A549 (cell line): ENCODE measurements at regions of chr17 and their contacts with region 1.

Region 1: GRCh38 chr17:17641621-17642409 is 39.4 kb upstream of the RAI1 start:
- DNase-seq: peak; percentile 70 to 85
- ATAC-seq: peak; percentile 85 to 96
- H3K4me3 ChIP-seq: no peak overlapping the region
- H3K27ac ChIP-seq: no peak overlapping the region
- H3K4me1 ChIP-seq: no peaks in the 10 kb centered on the region
- CTCF ChIP-seq: peak; percentile 97
- EP300 ChIP-seq: no peak
- POLR2A ChIP-seq: no peak
- RAD21 ChIP-seq: peak; percentile 97 to 99

Region 2: DNA sequence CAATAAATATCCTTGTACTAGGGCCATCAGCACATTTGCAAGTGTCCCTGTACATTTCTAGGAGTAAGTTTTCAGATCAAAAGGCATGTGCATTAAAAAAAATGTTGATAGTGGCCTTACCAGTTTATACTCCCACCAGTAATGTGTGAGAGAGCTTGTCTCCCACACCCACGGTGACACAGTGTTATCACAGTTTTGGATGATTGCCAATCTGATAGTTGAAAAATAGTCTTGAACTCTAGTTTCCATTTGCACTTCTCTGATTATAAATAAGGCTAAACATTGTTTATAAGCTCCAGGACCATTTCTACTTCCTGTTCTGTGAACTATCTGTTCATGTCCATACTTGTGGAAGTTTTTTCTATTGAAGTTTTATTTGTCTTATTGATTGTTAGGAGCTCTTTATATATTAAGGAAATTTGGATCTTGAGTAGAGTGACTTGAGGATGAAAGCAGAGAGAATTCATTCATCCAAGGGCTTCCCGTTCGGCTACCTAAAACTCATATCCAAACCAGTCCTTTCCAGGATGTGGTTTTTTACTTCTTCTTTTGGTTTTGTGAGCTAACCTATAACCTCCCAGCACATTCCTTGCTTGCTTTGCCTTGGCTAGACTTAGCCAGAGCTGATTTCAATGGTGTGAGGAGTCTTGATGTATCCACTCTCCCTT is 625.5 kb before region 1 on chr17:
- CTCF ChIA-PET with region 1: no interaction called
- POLR2A ChIA-PET with region 1: no interaction called
- DNase-seq: no peak
- ATAC-seq: no peak
- H3K4me3 ChIP-seq: no peak overlapping the region
- H3K27ac ChIP-seq: peak overlapping the region; percentile 94 to 98
- H3K4me1 ChIP-seq: peaks cover 67% of the 10 kb centered on the region
- CTCF ChIP-seq: no peak
- EP300 ChIP-seq: no peak
- POLR2A ChIP-seq: no peak
- RAD21 ChIP-seq: no peak

Region 3: DNA sequence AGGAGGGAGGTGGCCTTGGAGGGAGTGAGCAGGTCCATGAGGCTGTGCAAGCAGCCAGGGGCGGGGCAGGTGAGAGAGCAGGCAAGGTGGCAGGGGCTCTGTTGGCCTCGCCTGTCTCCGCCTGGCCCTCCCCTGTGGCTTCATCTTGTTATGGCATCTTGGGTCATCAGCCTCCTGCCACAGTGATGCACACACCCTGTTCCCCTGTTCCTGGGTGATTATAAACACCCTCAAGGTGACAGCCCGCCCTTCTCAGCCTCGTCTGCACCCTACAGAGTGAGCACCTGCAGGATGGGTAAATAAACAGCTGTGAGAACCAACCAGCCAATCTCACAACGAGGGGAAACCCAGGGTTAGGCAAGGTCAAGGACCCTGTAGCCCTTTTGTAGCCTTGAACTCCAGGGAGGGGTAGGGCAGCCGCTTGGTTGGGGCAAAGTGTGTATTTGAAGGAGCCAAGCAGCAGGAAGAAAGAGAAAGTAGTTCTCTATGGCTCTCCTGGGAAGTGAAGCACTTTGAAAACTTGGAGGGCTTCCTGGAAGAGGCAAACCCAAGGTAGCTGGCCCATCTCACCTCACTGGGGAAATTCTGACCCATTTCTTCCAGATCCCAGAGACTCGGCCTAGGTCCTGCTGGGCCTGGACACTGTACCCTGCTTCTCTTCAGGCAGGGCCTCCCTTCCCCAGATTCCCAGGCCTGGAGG is 278.0 kb before region 1 on chr17:
- CTCF ChIA-PET with region 1: interaction called, 365 read pairs
- POLR2A ChIA-PET with region 1: no interaction called
- DNase-seq: no peak
- ATAC-seq: peak; percentile 12 to 27; a peak in 2 of 6 replicates
- H3K4me3 ChIP-seq: no peak overlapping the region
- H3K27ac ChIP-seq: no peak overlapping the region
- H3K4me1 ChIP-seq: no peaks in the 10 kb centered on the region
- CTCF ChIP-seq: no peak
- EP300 ChIP-seq: no peak
- POLR2A ChIP-seq: no peak
- RAD21 ChIP-seq: no peak

Region 4: GRCh38 chr17:17394494-17394893 is 247.3 kb before region 1 on chr17:
- CTCF ChIA-PET with region 1: interaction called, 11 read pairs
- POLR2A ChIA-PET with region 1: no interaction called
- DNase-seq: no peak
- ATAC-seq: no peak
- H3K4me3 ChIP-seq: no peak overlapping the region
- H3K27ac ChIP-seq: no peak overlapping the region
- H3K4me1 ChIP-seq: no peaks in the 10 kb centered on the region
- CTCF ChIP-seq: no peak
- EP300 ChIP-seq: no peak
- POLR2A ChIP-seq: no peak
- RAD21 ChIP-seq: no peak

Region 5: GRCh38 chr17:17511881-17512858 is 129.6 kb before region 1 on chr17:
- CTCF ChIA-PET with region 1: interaction called, 12 read pairs
- POLR2A ChIA-PET with region 1: no interaction called
- DNase-seq: peak; percentile 39 to 54
- ATAC-seq: peak; percentile 31 to 62; a peak in 3 of 6 replicates
- H3K4me3 ChIP-seq: no peak overlapping the region
- H3K27ac ChIP-seq: peak overlapping the region in 1 of 2 experiments; percentile 45; a peak in 3 of 6 replicates
- H3K4me1 ChIP-seq: peaks cover 15% of the 10 kb centered on the region
- CTCF ChIP-seq: no peak
- EP300 ChIP-seq: no peak
- POLR2A ChIP-seq: no peak
- RAD21 ChIP-seq: no peak

Region 6: GRCh38 chr17:17613708-17614114 is 28.1 kb before region 1 on chr17:
- CTCF ChIA-PET with region 1: interaction called, 40 read pairs
- POLR2A ChIA-PET with region 1: no interaction called
- DNase-seq: peak; percentile 77 to 85
- ATAC-seq: peak; percentile 97 to 98
- H3K4me3 ChIP-seq: no peak overlapping the region
- H3K27ac ChIP-seq: no peak overlapping the region
- H3K4me1 ChIP-seq: no peaks in the 10 kb centered on the region
- CTCF ChIP-seq: peak; percentile 59
- EP300 ChIP-seq: no peak
- POLR2A ChIP-seq: no peak
- RAD21 ChIP-seq: peak; percentile 54 to 55; a peak in 3 of 5 replicates

Region 7: GRCh38 chr17:17628388-17629008 is 13.3 kb before region 1 on chr17:
- CTCF ChIA-PET with region 1: interaction called, 43 read pairs
- POLR2A ChIA-PET with region 1: no interaction called
- DNase-seq: no peak
- ATAC-seq: peak in 1 of 2 experiments; percentile 23; a peak in 1 of 6 replicates
- H3K4me3 ChIP-seq: no peak overlapping the region
- H3K27ac ChIP-seq: no peak overlapping the region
- H3K4me1 ChIP-seq: 0 out of 3 replicates have a peak, but pooled peaks cover 2% of the 10 kb centered on the region
- CTCF ChIP-seq: no peak
- EP300 ChIP-seq: no peak
- POLR2A ChIP-seq: no peak
- RAD21 ChIP-seq: no peak

Region 8: GRCh38 chr17:17729620-17730249 is 87.9 kb after region 1 on chr17:
- CTCF ChIA-PET with region 1: no interaction called
- POLR2A ChIA-PET with region 1: no interaction called
- DNase-seq: peak; percentile 48 to 79
- ATAC-seq: peak; percentile 63 to 78
- H3K4me3 ChIP-seq: no peak overlapping the region
- H3K27ac ChIP-seq: peak overlapping the region; percentile 30 to 79; a peak in 4 of 6 replicates
- H3K4me1 ChIP-seq: peaks cover 82% of the 10 kb centered on the region
- CTCF ChIP-seq: peak; percentile 56
- EP300 ChIP-seq: no peak
- POLR2A ChIP-seq: no peak
- RAD21 ChIP-seq: peak; percentile 55 to 67